ENCODE measurements at regions of chr22 and their contacts with region 1.

Region 1: GRCh38 chr22:20174785-20175596 is 24.1 kb upstream of the CCDC188 start:
- DNase-seq: no peak
- H3K4me3 ChIP-seq: no peak overlapping the region
- H3K27ac ChIP-seq: no peak overlapping the region
- H3K4me1 ChIP-seq: no peaks in the 10 kb centered on the region
- H3K27me3 ChIP-seq: no peaks in the 10 kb centered on the region
- CTCF ChIP-seq: no peak
- EP300 ChIP-seq: no peak
- POLR2A ChIP-seq: no peak

Region 2: DNA sequence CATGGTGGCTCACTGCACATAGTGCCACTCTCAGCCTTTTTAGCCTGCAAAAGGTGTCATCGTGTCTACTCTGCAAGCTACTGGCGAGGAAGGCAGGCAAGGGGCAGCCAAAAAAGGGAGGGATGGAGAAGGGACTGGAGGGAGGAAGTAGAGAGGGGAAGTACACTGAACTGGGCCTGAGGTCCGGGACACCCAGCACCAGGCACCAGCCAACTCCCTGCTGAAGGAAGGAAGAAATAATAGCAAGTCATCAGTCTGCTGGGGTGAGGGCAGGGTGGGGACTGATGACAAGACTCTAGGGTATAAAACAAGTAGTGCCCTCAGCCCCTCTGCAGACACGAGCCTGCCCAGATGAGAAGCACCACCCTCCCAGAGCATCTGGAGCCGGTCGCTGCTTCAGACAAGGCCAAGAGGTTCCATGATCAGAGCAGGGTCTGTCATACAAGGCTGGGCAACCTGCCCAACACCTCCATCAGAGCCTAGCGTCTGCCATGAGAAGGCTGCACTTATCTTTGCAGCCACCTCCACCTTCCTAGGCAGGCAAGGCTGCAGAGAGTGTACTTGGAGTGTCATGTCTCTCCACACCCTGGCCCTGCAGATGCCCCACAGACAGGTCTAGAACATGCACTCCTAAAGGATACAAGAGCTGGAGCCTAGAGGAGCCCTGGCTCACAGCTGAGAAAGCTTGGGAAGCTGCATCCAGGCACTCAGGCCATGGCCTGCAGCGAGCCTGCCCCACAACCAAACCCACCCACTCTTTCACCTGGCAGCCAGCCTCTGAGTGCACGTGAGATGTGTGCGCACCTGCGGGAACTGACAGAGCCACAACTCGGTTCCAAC is 242.4 kb before region 1 on chr22:
- intact Hi-C with region 1: no loop called
- DNase-seq: no peak
- H3K4me3 ChIP-seq: no peak overlapping the region
- H3K27ac ChIP-seq: no peak overlapping the region
- H3K4me1 ChIP-seq: no peaks in the 10 kb centered on the region
- H3K27me3 ChIP-seq: no peaks in the 10 kb centered on the region
- CTCF ChIP-seq: no peak
- EP300 ChIP-seq: no peak
- POLR2A ChIP-seq: no peak

Region 3: DNA sequence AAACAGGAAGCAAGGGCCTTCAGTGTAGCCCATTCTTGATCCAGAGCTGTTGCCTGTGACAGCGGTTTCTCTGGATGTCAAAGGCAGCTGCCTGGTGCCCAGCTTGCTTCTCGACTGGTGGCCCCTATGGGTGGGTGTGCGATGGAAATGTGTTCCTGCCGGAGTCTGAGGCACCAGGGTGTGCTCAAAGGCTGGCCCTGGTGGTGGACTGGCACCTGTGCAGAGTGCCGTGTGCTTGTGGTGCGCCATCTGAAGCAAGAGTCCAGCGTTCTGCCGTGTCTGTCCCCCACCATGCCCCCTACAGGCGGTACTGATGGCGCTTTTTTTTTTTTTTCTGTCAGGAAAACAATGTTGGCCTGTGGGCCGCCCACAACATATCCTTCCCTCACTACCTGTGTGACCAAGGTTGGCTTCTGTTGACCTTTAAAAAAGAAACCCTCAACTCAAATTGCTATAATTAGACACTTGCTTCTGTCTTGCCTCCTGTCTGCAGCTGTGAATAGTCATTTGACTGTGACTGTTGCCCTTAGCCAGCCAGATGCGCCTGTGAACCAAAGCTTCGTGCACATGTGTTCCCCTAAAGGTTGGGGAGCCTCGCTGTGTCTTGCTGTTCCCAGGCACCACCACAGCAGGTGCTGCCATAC is 63.8 kb before region 1 on chr22:
- intact Hi-C with region 1: no loop called
- DNase-seq: peak in 1 of 5 donors; percentile 10
- H3K4me3 ChIP-seq: no peak overlapping the region
- H3K27ac ChIP-seq: no peak overlapping the region
- H3K4me1 ChIP-seq: peaks cover 4% of the 10 kb centered on the region
- H3K27me3 ChIP-seq: no peaks in the 10 kb centered on the region
- CTCF ChIP-seq: no peak
- EP300 ChIP-seq: no peak
- POLR2A ChIP-seq: no peak

Region 4: DNA sequence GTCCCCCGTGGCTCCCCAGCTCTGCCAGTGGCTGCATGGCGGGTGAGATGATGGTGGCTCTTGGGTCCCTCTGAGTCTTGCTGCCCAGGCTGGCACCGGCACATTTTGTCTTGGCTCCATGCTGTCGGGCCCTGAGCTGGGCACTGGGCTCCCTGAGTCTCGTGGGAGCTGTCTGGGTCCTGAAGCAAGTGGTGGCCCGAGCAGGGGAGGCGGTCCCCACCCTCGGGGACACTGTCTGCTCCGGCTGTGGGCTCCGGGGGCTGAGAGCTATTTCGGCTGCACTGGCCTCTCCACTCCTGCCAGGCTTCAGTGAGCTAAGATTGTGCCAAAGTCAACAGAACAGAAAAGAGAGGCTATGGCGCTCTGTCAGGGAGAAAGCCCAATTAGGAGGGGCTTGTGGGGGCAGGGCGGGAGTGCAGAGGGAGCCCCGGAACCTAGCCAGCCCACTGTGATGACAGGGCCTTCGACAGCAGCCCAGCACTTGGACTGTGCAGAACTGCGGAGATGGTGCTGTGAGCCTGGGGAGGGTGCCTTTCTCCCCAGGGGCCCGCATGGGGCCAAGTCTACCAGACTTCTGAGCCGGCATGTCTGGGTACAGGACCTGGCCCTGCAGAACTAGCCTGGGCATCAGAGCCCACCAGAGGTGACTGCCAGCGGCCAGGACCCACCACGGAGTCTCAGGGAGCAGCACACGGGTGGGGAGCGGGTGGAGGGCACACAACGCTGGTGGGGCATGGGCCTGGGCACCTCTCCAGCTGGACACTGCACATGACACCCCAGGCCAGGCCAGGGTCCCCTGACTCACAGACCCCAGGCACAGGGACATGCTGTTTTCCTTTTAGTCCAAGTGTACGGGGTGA is 55.2 kb after region 1 on chr22:
- intact Hi-C with region 1: loop called in 1 of 4 experiments (anchors 5 kb)
- DNase-seq: no peak
- H3K4me3 ChIP-seq: no peak overlapping the region
- H3K27ac ChIP-seq: no peak overlapping the region
- H3K4me1 ChIP-seq: no peaks in the 10 kb centered on the region
- H3K27me3 ChIP-seq: no peaks in the 10 kb centered on the region
- CTCF ChIP-seq: no peak
- EP300 ChIP-seq: no peak
- POLR2A ChIP-seq: no peak